ENCODE measurements at regions of chr5 and their contacts with region 1.

Region 1: GRCh38 chr5:62322484-62322883 is 16.5 kb downstream of the KIF2A start:
- DNase-seq: no peak
- H3K4me3 ChIP-seq: no peak overlapping the region
- H3K27ac ChIP-seq: no peak overlapping the region
- H3K4me1 ChIP-seq: peaks cover 4 to 33% (median 24%) of the 10 kb centered on the region in 4 experiments
- H3K27me3 ChIP-seq: no peaks in the 10 kb centered on the region

Region 2: DNA sequence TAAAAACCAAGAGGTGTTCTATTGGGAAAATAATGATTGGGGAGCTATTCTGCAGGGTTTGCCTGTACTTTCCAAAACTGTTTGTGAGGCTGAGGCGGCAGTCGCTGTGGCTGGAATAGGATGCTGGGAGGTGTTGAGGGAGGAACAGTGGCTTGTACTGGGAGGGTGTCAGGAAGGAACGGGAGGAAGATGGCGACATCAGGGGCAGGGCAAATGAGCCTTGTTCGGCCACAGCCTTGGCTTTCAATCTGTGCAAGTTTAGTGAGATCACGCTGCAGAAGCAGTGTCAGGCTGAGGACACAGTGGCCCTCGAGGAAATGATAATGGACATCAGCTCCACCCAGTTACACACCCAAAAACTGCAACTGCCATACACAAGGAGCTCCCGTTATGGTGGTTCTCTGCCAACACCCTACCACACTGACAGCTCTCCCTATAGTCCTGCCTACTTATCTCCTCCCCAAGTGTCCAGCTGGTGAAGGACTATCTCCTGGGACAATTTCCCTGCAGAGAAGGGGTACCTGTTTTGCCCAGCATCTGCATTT is 10.8 kb after region 1 on chr5:
- CTCF ChIA-PET with region 1: interaction called, 12 read pairs
- POLR2A ChIA-PET with region 1: interaction called, 4 read pairs
- DNase-seq: no peak
- H3K4me3 ChIP-seq: no peak overlapping the region
- H3K27ac ChIP-seq: no peak overlapping the region
- H3K4me1 ChIP-seq: peaks cover 0 to 16% (median 9%) of the 10 kb centered on the region in 4 experiments
- H3K27me3 ChIP-seq: no peaks in the 10 kb centered on the region